Endothelial cell of umbilical vein (primary cell): ENCODE measurements at regions of chr3 and their contacts with region 1.

Region 1: DNA sequence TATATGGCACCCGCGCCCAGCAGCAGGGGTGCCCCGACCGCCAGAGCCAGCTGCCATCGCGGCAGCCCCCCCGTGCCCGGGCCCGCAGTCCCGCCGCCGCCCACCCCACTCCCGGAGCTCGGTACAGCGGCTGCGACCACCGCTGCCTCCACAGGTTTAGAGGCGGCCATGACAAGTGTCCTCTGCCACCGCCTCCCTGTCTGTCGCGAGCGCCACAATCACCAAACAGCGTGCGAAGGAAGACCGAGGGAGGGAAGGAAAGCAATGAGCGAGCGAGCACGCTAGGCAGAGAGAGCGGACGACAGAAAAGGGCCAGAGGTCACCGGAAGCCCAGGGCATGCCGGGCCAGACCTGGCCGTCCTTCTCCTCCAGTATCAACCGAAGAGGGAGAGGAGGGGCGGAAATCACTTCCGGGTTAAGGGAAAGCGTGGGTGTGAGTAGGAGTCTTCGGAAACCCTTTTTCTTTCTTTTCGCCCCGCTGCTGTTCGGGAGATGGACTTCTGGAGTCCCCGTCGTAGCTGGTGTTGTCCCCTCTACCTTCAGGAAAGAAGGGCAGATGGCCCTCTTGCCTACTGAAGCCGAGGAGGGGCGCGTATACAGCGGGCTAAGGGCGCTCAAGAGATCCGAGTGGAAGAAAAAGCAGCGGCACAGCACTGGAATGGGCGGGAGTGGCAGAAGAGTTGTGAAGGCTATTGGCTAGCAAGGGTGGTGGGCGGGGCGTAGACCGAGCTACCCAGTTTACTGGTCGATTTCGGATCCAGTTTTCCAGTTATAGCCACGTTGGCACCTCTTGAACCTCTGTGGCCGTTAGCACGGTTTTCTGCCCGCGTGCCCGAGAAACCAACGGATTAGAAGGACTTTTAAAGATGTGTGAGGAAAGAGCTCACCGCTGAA is at the starts of genes LNP1 and TOMM70:
- DNase-seq: peak; percentile 98
- H3K4me3 ChIP-seq: peak within 1 kb of the TSS; percentile 55 to 94 (median 76)
- H3K27ac ChIP-seq: peak within 1 kb of the TSS; percentile 75
- H3K4me1 ChIP-seq: peaks cover 23% of the 10 kb centered on the region
- H3K27me3 ChIP-seq: no peaks in the 10 kb centered on the region
- CTCF ChIP-seq: no peak
- POLR2A ChIP-seq: peak; percentile 93
- total RNA-seq, gene LNP1: 0.80 and 0.81 TPM in 2 replicates
- total RNA-seq, gene TOMM70: 28.3 and 32.3 TPM in 2 replicates

Region 2: DNA sequence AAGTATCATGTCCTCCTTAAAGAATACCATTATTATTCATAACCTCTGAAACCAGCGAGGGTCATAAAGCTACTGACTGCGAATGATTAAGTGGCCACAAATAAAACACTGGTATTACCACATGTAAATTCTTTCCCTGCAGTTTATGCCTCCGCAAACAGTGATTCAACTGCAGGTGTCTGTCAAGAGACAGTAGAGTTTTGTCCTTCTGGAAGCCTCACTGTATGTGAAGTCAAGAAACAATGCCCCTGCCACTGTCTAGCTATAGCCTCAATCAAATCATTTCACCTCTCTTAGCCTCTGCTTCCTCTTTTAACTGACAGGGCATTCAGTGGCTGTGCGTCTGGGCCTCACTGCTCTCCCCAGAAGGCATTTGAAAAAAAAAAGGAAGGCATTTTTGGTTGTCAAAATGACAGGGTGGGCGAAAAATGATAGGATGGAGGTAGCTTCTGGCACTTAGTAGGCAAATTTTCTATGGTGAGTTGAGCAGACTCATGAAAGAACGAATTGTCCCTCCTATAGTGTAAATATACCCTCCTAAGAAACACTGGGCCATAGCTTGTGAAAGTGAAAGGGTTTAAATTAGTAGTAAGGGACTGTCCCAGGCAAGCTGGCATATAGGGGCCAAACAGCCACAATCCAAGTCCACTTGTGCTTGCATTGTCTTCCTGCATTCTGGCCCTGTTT is 353.4 kb before region 1 on chr3:
- CTCF ChIA-PET with region 1: no interaction called
- POLR2A ChIA-PET with region 1: no interaction called
- dilution Hi-C with region 1: no loop called
- intact Hi-C with region 1: loop called (anchors 5 kb)
- DNase-seq: peak; percentile 58
- H3K4me3 ChIP-seq: no peak overlapping the region
- H3K27ac ChIP-seq: peak overlapping the region; percentile 28
- H3K4me1 ChIP-seq: peaks cover 33% of the 10 kb centered on the region
- H3K27me3 ChIP-seq: no peaks in the 10 kb centered on the region
- CTCF ChIP-seq: no peak
- POLR2A ChIP-seq: no peak

Region 3: GRCh38 chr3:100334488-100335351 is 66.3 kb before region 1 on chr3 and contains the start of gene NIT2:
- CTCF ChIA-PET with region 1: no interaction called
- POLR2A ChIA-PET with region 1: no interaction called
- dilution Hi-C with region 1: no loop called
- intact Hi-C with region 1: loop called (anchors 1 kb)
- DNase-seq: peak; percentile 72
- H3K4me3 ChIP-seq: peak within 1 kb of the TSS; percentile 28 to 76 (median 60)
- H3K27ac ChIP-seq: no peak within 1 kb of the TSS
- H3K4me1 ChIP-seq: peaks cover 10% of the 10 kb centered on the region
- H3K27me3 ChIP-seq: no peaks in the 10 kb centered on the region
- CTCF ChIP-seq: no peak
- POLR2A ChIP-seq: peak; percentile 81
- total RNA-seq, gene NIT2: 20.5 and 29.1 TPM in 2 replicates

Region 4: DNA sequence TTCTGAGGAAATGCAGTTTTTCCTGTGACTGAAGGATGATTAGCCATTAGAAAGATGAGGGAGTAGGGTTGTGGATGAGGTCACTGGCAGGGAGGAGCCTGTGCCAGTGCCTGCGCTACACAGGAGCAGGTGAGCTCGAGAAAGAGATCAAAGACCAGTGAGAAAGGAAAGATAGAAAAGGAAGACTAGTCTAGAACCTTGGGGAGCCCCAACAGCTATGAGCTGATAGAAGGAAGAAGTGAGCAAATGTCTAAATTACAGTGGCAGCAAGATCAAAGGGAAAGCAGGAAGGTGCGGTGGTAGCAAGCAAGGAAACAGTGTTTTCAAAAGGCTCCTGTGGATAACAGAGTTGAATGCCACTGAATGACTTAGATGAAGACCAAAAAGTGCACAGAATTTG is 39.9 kb after region 1 on chr3:
- CTCF ChIA-PET with region 1: no interaction called
- POLR2A ChIA-PET with region 1: no interaction called
- dilution Hi-C with region 1: no loop called
- intact Hi-C with region 1: no loop called
- DNase-seq: no peak
- H3K4me3 ChIP-seq: no peak overlapping the region
- H3K27ac ChIP-seq: no peak overlapping the region
- H3K4me1 ChIP-seq: no peaks in the 10 kb centered on the region
- H3K27me3 ChIP-seq: no peaks in the 10 kb centered on the region
- CTCF ChIP-seq: no peak
- POLR2A ChIP-seq: no peak

Region 5: DNA sequence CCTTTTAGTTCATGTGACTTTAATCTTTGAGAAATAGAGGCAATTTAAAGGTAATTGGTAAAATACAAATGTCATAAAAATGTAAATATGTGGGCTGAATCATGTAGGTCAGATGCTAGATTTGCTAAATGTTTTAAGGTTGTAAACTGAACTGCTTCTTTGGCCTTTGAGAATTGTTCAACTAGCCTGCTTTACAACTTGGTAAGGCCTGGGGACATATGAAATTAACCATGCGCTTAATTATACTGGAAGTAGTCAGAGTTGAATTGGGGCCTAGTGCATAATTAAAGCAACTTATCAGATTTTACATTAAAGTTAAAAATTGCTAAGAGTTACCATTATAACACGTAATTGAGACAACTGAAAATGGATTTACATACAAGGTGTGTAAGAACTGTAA is 70.4 kb after region 1 on chr3:
- CTCF ChIA-PET with region 1: no interaction called
- POLR2A ChIA-PET with region 1: no interaction called
- dilution Hi-C with region 1: no loop called
- intact Hi-C with region 1: no loop called
- DNase-seq: no peak
- H3K4me3 ChIP-seq: no peak overlapping the region
- H3K27ac ChIP-seq: no peak overlapping the region
- H3K4me1 ChIP-seq: no peaks in the 10 kb centered on the region
- H3K27me3 ChIP-seq: peaks cover 0 to 3% of the 10 kb centered on the region in 2 experiments
- CTCF ChIP-seq: no peak
- POLR2A ChIP-seq: no peak

Region 6: GRCh38 chr3:100492059-100493006 is 91.3 kb after region 1 on chr3 and contains the start of gene TMEM45A:
- CTCF ChIA-PET with region 1: no interaction called
- POLR2A ChIA-PET with region 1: no interaction called
- dilution Hi-C with region 1: no loop called
- intact Hi-C with region 1: loop called (anchors 2 kb)
- DNase-seq: peak; percentile 97
- H3K4me3 ChIP-seq: peak within 1 kb of the TSS; percentile 55 to 88 (median 57)
- H3K27ac ChIP-seq: peak within 1 kb of the TSS; percentile 61
- H3K4me1 ChIP-seq: peaks cover 9% of the 10 kb centered on the region
- H3K27me3 ChIP-seq: peaks cover 0 to 3% of the 10 kb centered on the region in 2 experiments
- CTCF ChIP-seq: no peak
- POLR2A ChIP-seq: peak; percentile 66
- total RNA-seq, gene TMEM45A: 5.4 and 5.6 TPM in 2 replicates

Region 7: GRCh38 chr3:100570811-100571210 is 169.8 kb after region 1 on chr3:
- CTCF ChIA-PET with region 1: no interaction called
- POLR2A ChIA-PET with region 1: no interaction called
- dilution Hi-C with region 1: no loop called
- intact Hi-C with region 1: no loop called
- DNase-seq: no peak
- H3K4me3 ChIP-seq: no peak overlapping the region
- H3K27ac ChIP-seq: no peak overlapping the region
- H3K4me1 ChIP-seq: no peaks in the 10 kb centered on the region
- H3K27me3 ChIP-seq: no peaks in the 10 kb centered on the region
- CTCF ChIP-seq: no peak
- POLR2A ChIP-seq: no peak

Region 8: GRCh38 chr3:100708967-100709841 is 308.2 kb after region 1 on chr3 and contains the start of gene TFG:
- CTCF ChIA-PET with region 1: no interaction called
- POLR2A ChIA-PET with region 1: no interaction called
- dilution Hi-C with region 1: no loop called
- intact Hi-C with region 1: loop called (anchors 2 kb)
- DNase-seq: peak; percentile 100
- H3K4me3 ChIP-seq: peak within 1 kb of the TSS; percentile 79 to 99 (median 89)
- H3K27ac ChIP-seq: peak within 1 kb of the TSS; percentile 78
- H3K4me1 ChIP-seq: peaks cover 8% of the 10 kb centered on the region
- H3K27me3 ChIP-seq: peaks cover 5 to 7% of the 10 kb centered on the region in 2 experiments
- CTCF ChIP-seq: no peak
- POLR2A ChIP-seq: peak; percentile 61
- total RNA-seq, gene TFG: 106 and 107 TPM in 2 replicates

Region 9: DNA sequence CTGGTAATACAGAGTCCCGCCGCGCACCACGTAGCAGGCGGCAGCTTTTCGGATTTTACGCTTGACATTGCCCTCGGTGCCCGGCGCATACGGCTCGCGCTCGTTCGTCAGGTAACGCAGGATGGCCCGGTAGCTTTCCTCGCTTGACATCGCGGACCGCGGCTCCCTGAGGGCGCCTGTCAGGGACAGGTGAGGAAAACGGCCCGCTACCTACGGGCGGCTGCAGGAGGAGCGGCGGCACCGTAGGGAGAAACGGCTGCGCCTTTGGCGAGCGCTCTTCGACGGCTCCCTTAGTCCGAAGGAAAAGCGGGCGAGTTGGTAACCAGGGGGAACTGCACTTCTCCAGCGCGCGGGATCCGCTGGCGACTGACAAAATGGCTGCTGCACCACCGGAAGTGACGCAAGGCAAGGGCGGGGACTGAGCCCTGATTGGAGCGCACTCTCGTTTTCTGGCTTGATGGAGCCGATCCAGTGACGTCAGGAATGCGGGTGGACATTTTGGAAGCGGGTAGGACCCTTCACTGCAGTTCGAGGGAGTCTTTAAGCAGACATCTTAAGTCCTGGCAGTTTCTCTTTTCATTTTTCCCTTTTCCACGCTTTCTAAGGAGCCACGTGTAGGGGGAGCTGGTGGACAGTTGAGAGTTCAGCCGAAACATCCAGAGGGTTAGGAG is 1275.9 kb after region 1 on chr3 and contains the start of gene ZBTB11:
- CTCF ChIA-PET with region 1: no interaction called
- POLR2A ChIA-PET with region 1: no interaction called
- dilution Hi-C with region 1: no loop called
- intact Hi-C with region 1: loop called (anchors 5 kb)
- DNase-seq: peak; percentile 100
- H3K4me3 ChIP-seq: peak within 1 kb of the TSS; percentile 67 to 80 (median 76)
- H3K27ac ChIP-seq: peak within 1 kb of the TSS; percentile 52
- H3K4me1 ChIP-seq: peaks cover 16% of the 10 kb centered on the region
- H3K27me3 ChIP-seq: no peaks in the 10 kb centered on the region
- CTCF ChIP-seq: peak; percentile 56 to 67
- POLR2A ChIP-seq: peak; percentile 62
- total RNA-seq, gene ZBTB11: 14.7 and 15.8 TPM in 2 replicates